Activated naive CD4-positive, alpha-beta T cell treated with anti-CD3 and anti-CD28 coated beads for 36 hours (primary cell): ENCODE measurements at regions of chr14 and their contacts with region 1.

Region 1: GRCh38 chr14:67526676-67527459 is 6.2 kb upstream of the PLEKHH1 start:
- DNase-seq: peak; percentile 67
- H3K4me3 Mint-ChIP-seq: no peak overlapping the region
- H3K27ac Mint-ChIP-seq: no peak overlapping the region
- H3K4me1 Mint-ChIP-seq: no peaks in the 10 kb centered on the region
- H3K27me3 Mint-ChIP-seq: peaks cover 14% of the 10 kb centered on the region

Region 2: DNA sequence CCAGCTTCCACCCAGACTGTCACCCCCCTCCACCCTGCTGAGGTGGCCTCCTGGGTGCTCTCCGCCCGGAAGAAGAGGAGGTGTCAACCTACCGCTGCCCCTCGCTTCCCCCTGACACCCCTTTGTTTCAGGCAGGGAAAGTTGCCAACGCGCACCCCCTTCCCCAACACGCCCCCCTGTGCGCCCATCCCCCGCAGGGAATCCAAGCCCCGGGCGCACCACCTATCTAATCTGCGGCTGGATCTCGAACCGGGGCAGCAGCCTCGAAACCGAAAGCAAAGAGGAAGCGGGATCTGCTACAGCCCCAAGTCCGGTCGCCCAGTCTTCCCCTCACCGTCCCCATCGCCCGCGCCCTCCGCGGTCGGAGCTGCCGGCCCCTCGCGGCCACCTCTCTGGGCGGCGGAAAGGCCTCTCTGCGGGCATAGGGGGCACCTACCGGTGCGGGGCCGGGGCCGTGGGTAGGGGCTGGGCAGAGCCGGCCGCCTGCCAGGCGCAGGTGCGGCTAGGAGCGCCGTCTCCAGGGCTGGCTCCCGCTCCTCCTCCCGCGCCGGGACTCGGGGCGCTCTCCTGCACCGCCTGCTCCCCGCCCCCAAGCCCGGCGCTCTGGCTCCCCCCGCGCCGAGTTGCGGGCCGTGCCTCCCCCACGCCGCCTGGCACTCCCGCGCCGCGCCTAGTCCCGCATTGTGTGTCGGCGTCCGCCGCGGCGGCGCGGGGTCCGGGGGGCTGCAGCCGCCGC is 12.1 kb before region 1 on chr14:
- CTCF ChIA-PET with region 1: interaction called, 24 read pairs
- intact Hi-C with region 1: no loop called
- DNase-seq: peak; percentile 23
- H3K4me3 Mint-ChIP-seq: peak overlapping the region; percentile 75
- H3K27ac Mint-ChIP-seq: no peak overlapping the region
- H3K4me1 Mint-ChIP-seq: peaks cover 5% of the 10 kb centered on the region
- H3K27me3 Mint-ChIP-seq: no peaks in the 10 kb centered on the region

Region 3: DNA sequence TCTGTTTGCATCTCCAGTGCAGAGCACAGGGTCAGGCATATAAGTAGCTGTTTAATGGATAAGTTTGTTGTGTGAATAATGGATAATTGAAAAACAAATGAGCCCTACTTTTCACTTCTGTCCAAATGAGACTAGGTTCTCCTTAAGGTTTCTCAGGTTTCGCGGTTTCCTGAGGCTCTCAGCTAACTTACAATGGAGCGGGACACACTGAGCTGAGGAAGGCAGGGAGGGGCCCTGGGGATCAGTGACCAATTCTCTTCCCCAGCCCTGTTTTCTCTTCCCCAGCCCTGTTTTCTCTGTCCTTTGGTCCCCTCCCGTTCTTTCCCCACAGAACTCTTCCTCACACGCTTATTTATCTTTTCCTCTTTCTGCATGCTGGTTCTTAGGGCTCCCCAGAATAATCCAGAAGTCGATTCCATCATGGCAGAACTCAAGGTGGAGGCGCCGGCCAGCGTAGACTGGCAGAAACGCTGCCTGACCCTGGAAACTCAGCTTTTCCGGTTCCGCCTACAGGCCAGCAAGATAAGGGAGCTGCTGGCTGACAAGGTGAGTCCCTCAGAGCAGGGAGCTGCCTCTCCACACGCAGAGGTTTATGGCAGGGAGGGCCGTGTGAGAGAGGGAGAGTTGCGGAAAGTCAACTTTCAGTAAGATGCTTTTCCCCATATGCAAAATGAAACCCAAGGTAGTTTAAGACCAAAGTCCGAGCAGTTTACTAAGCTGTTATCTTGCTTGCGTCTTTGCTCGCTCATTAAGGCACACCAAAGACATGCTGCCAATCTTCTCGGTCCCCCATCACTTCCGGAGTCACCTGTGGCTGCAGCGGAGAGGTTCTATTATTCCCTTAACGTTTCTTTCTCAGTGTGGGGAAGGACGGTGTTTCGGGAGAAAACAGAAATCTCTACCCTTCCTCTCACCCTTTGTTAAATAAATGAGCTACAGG is 14.8 kb after region 1 on chr14:
- CTCF ChIA-PET with region 1: interaction called, 25 read pairs
- intact Hi-C with region 1: no loop called
- DNase-seq: peak; percentile 31
- H3K4me3 Mint-ChIP-seq: peak overlapping the region; percentile 60
- H3K27ac Mint-ChIP-seq: no peak overlapping the region
- H3K4me1 Mint-ChIP-seq: peaks cover 6% of the 10 kb centered on the region
- H3K27me3 Mint-ChIP-seq: peaks cover 18% of the 10 kb centered on the region

Region 4: DNA sequence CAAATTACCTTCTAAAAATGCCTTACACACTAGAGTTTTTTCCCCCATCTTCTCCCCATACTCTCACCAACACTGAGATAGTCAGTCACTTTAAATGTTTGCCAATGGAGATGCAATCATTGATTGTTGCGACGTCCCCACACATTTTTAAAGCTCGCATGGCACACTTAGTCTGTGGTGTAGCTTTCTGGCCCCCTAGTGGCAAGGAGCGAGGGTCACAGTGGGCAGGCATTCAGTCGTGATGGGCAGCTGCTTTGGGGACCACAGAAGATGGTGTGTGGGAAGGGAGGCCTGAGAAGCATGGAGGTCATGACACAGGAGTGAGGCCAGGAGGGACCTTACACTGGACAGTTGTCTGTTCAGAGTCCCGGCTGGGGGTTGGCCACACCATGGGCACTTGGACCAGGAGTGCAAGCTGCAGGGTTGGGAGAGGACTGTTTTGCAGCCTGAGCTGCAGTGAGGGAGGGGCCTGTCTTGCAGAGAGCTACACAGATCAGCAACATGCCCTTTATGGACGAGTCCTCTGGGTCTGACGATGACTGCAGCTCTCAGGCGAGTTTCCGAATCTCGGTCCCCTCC is 44.5 kb after region 1 on chr14:
- CTCF ChIA-PET with region 1: interaction called, 121 read pairs
- intact Hi-C with region 1: loop called (anchors 1 kb)
- DNase-seq: peak; percentile 84
- H3K4me3 Mint-ChIP-seq: no peak overlapping the region
- H3K27ac Mint-ChIP-seq: no peak overlapping the region
- H3K4me1 Mint-ChIP-seq: no peaks in the 10 kb centered on the region
- H3K27me3 Mint-ChIP-seq: no peaks in the 10 kb centered on the region

Region 5: GRCh38 chr14:67583711-67584644 is 57.1 kb after region 1 on chr14:
- CTCF ChIA-PET with region 1: interaction called, 11 read pairs
- intact Hi-C with region 1: no loop called
- DNase-seq: peak; percentile 61
- H3K4me3 Mint-ChIP-seq: no peak overlapping the region
- H3K27ac Mint-ChIP-seq: no peak overlapping the region
- H3K4me1 Mint-ChIP-seq: no peaks in the 10 kb centered on the region
- H3K27me3 Mint-ChIP-seq: no peaks in the 10 kb centered on the region

Region 6: DNA sequence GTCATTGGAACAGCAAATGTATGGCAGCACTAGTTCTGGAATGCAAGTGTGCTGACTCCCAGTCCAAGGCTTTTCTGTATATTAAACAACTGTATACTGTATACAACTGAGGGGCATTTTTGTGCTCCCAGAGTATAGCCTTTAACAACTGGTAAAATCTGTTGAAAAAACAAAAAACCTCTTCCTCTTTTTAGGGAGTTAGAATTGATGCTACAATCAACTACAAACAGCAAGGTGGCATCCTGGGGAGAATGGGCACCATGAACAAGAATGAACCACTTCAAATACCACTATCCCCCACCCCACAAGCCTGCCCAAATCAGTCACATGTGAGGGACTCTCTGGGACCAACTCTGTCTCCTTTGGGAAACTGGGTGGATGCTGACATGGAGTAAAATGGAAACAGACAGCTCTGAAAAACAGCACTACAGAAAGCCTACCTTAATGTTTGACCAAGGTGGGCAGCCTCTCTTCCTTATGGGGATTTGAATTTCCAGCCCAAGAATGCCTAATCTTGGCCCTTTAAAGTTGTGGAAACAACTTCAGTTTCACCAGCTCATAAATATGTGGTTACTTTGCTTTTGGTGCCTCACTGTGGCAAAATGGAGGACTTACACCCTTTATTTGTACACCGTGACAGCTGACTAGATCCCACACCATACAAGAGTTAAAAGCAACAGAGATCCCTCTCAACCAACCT is 140.0 kb after region 1 on chr14:
- CTCF ChIA-PET with region 1: interaction called, 6 read pairs
- intact Hi-C with region 1: loop called (anchors 1 kb)
- DNase-seq: peak; percentile 55
- H3K4me3 Mint-ChIP-seq: no peak overlapping the region
- H3K27ac Mint-ChIP-seq: no peak overlapping the region
- H3K4me1 Mint-ChIP-seq: peaks cover 50% of the 10 kb centered on the region
- H3K27me3 Mint-ChIP-seq: no peaks in the 10 kb centered on the region

Region 7: DNA sequence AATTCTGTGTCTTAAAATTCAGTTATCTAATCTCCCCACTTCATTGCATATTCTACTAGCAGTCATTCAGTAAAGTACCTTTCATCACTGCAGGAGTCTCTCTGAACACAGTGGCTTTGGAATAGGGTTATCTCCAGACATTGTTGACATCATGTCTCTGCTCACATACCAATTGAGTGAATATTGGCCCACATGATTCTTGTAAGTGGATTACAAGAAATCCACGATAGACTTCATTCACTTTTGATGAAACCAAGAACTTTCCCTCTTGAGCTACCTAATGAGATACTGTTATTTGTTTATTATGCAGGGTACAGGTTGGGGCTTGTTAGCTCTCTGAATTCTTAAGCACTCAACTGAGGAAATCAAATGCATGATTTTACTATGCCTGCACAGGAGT is 577.6 kb after region 1 on chr14:
- CTCF ChIA-PET with region 1: no interaction called
- intact Hi-C with region 1: no loop called
- DNase-seq: no peak
- H3K4me3 Mint-ChIP-seq: no peak overlapping the region
- H3K27ac Mint-ChIP-seq: no peak overlapping the region
- H3K4me1 Mint-ChIP-seq: peaks cover 6% of the 10 kb centered on the region
- H3K27me3 Mint-ChIP-seq: no peaks in the 10 kb centered on the region